ENCODE measurements at regions of chr11 and their contacts with region 1.

Region 1: GRCh38 chr11:117292616-117293015 is 1.5 kb downstream of the BACE1-AS start:
- DNase-seq: no peak
- H3K4me3 ChIP-seq: no peak overlapping the region
- H3K27ac ChIP-seq: no peak overlapping the region
- H3K4me1 ChIP-seq: no peaks in the 10 kb centered on the region
- H3K27me3 ChIP-seq: no peaks in the 10 kb centered on the region
- CTCF ChIP-seq: no peak
- POLR2A ChIP-seq: no peak

Region 2: DNA sequence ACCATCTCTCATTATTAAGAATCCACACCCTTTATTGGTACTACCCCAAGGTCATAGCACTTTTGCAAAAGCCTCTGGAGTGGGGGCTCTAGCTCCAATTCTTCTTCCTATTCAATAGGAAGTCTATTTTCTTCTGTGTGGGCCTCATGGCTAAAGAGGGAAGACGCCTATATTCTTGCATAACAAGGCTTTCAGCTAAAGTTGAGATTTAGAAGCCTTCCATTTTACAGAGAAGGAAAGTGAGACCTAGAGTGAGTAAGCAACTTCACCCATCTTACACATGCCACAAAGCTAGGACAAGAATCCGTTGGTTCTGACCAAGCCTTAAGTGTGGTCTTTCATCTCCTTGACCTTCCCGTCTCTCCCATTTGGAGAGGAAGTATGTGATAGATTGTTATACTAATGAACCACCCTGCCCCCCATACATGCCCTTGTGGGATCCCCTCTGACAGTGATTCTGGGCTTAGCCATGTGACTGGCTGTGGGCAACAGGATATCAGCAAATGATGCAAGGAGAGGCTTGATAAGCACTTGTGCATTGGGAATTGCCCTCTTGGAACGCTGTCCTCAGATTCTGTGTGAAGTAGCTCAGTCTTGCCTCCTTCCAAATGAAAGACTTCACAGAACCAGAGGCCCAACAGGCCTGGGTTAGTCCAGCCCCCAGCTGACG is 11.2 kb after region 1 on chr11:
- intact Hi-C with region 1: no loop called
- DNase-seq: no peak
- H3K4me3 ChIP-seq: no peak overlapping the region
- H3K27ac ChIP-seq: no peak overlapping the region
- H3K4me1 ChIP-seq: peaks cover 0 to 8% of the 10 kb centered on the region in 2 donors
- H3K27me3 ChIP-seq: no peaks in the 10 kb centered on the region
- CTCF ChIP-seq: no peak
- POLR2A ChIP-seq: no peak

Region 3: DNA sequence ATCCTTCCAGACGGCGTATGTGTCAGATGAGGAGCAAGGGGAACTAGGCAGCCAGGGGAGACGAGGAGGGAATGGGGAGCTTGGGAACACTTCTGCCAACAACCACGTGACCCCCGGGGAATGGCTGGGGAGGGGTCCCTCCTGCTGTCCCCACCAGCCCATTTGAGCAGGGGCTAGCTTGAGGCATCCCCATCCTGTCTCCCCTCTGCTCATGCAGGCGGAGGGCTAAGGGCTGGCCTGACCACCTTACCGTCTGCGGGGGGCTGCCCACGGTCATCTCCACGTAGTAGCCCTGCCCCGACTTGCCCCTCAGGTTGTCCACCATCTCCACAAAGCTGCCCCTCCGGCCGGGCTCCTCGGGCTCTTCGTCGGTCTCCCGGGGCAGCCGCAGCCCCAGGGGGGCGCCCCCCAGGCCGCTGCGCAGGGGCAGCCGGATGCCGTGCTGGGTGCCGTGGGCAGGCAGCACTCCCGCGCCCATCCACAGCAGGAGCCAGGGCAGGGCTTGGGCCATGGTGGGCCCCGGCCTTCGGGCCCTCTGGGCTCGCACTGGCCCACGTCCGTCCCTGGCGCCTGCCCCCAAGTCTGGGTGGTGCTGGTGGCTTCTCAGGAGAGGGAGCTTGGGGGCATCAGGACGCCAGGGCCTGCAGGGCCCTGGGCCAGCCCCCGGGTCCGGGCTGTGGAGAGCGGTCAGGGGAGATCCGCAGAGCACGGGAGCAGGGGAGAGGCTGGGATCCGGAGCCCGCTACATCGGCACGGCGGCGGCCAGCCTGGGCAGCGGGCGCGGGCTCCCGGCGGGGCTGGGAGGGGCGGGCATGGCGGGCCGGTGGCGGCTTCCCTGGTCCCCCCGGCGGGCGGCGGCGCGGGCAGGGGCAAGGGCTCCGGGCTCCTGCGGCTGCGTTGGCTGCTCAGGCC is 22.9 kb after region 1 on chr11:
- intact Hi-C with region 1: loop called (anchors 1 kb)
- DNase-seq: no peak
- H3K4me3 ChIP-seq: peak overlapping the region; percentile 83 to 97 (median 87)
- H3K27ac ChIP-seq: peak overlapping the region; percentile 7 to 53
- H3K4me1 ChIP-seq: peaks cover 5 to 11% of the 10 kb centered on the region in 2 donors
- H3K27me3 ChIP-seq: no peaks in the 10 kb centered on the region
- CTCF ChIP-seq: no peak
- POLR2A ChIP-seq: no peak

Region 4: GRCh38 chr11:117327567-117328374 is 35.2 kb after region 1 on chr11 and contains the start of gene CEP164:
- intact Hi-C with region 1: no loop called
- DNase-seq: peak; percentile 94
- H3K4me3 ChIP-seq: peak within 1 kb of the TSS; percentile 83 to 87 (median 84)
- H3K27ac ChIP-seq: peak within 1 kb of the TSS; percentile 94 to 97
- H3K4me1 ChIP-seq: peaks cover 0 to 3% of the 10 kb centered on the region in 2 donors
- H3K27me3 ChIP-seq: no peaks in the 10 kb centered on the region
- CTCF ChIP-seq: no peak
- POLR2A ChIP-seq: peak; percentile 47
- total RNA-seq, gene CEP164: 14.9 to 32.6 (median 20.3) TPM

Region 5: GRCh38 chr11:117907251-117907981 is 614.8 kb after region 1 on chr11:
- intact Hi-C with region 1: no loop called
- DNase-seq: peak; percentile 59 to 68
- H3K4me3 ChIP-seq: no peak overlapping the region
- H3K27ac ChIP-seq: peak overlapping the region in 1 of 2 donors; percentile 25
- H3K4me1 ChIP-seq: no peaks in the 10 kb centered on the region
- H3K27me3 ChIP-seq: no peaks in the 10 kb centered on the region
- CTCF ChIP-seq: no peak
- POLR2A ChIP-seq: no peak

Measured in breast epithelium (tissue), 4 donors.